HepG2 (cell line): ENCODE measurements at regions of chr11 and their contacts with region 1.

Region 1: DNA sequence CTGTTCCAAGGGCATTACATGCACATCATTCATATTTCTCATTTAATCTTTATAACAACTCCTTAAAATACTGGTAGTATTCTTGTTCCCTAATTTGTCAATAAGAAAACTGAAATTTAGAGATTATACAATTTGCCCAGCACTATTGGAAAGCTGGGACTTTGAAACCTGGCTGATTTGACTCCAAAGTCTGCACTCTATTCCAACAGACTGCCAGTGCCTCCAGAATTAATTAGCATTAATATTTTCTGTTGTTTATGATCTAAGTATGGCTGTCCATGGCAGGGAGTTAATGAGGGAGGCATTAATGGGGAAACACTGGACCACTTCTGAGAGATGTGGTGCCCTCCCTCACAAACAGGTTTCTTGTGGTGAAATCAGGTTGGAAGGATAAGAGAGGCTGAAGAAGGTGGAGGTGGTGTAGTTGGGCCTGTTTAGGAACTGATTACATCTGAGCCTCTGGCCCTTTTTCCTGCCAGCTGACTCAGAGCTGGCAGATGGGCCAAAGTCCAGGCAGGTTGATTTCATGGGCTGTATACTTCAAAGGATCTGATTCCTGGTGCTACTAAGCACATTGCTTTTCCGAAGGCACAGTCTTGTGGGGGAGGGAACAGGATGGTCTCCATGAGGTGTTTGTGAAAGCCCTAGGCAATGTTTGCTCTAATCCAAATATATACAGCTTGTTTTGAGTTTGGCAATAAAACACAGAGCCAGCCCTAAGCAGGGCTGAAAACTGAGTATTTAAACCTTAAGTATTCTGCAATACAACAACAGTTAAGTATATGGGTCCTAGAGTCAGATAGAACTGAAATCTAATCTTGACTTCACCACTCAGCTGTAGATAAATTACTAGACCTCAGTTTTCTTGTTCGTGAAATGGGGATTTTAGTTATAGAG is 21.0 kb upstream of the RAB30 start:
- DNase-seq: peak; percentile 98
- ATAC-seq: peak; percentile 97
- H3K4me3 ChIP-seq: peak overlapping the region in 2 of 3 experiments; percentile 0 to 33; a peak in 1 of 6 replicates
- H3K27ac ChIP-seq: peak overlapping the region; percentile 90
- H3K4me1 ChIP-seq: peaks cover 32% of the 10 kb centered on the region
- H3K27me3 ChIP-seq: no peaks in the 10 kb centered on the region
- CTCF ChIP-seq: no peak
- EP300 ChIP-seq: peak in 1 of 2 experiments; percentile 91; a peak in 2 of 4 replicates
- POLR2A ChIP-seq: peak; percentile 31 to 41; a peak in 2 of 4 replicates
- RAD21 ChIP-seq: peak; percentile 40; the same call in 1 of the 2 replicates

Region 2: GRCh38 chr11:82890936-82891335 is 201.8 kb before region 1 on chr11:
- CTCF ChIA-PET with region 1: no interaction called
- POLR2A ChIA-PET with region 1: no interaction called
- in situ Hi-C with region 1: no loop called
- intact Hi-C with region 1: no loop called
- DNase-seq: no peak
- ATAC-seq: no peak
- H3K4me3 ChIP-seq: no peak overlapping the region
- H3K27ac ChIP-seq: no peak overlapping the region
- H3K4me1 ChIP-seq: peaks cover 5% of the 10 kb centered on the region; the same call in 1 of the 2 replicates
- H3K27me3 ChIP-seq: no peaks in the 10 kb centered on the region
- CTCF ChIP-seq: no peak
- EP300 ChIP-seq: no peak
- POLR2A ChIP-seq: no peak
- RAD21 ChIP-seq: no peak

Region 3: DNA sequence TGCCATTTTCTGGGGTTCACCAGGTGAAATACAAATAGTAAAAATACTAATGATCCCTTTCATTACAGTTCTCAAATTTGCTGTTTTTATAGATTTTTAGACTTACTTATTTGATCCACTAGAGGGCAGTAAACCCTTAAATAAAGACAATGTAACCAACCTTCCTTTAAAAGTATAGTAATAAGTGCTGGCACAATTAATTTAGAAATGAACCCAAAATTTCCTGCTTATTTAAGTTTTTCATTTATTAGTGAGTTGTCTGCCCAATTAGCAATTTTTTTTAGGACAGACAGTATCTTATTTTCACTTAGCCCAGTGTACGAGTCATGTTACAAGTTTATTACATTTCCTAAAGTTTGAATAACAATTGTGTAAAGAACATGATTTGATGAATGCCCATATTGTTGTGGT is 186.5 kb before region 1 on chr11:
- CTCF ChIA-PET with region 1: no interaction called
- POLR2A ChIA-PET with region 1: interaction called, 6 read pairs
- in situ Hi-C with region 1: no loop called
- intact Hi-C with region 1: loop called (anchors 5 kb)
- DNase-seq: peak; percentile 26
- ATAC-seq: no peak
- H3K4me3 ChIP-seq: no peak overlapping the region
- H3K27ac ChIP-seq: no peak overlapping the region
- H3K4me1 ChIP-seq: peaks cover 32% of the 10 kb centered on the region
- H3K27me3 ChIP-seq: no peaks in the 10 kb centered on the region
- CTCF ChIP-seq: peak; percentile 51
- EP300 ChIP-seq: no peak
- POLR2A ChIP-seq: no peak
- RAD21 ChIP-seq: peak; percentile 32; the same call in 1 of the 2 replicates

Region 4: GRCh38 chr11:83115551-83115950 is 22.8 kb after region 1 on chr11:
- CTCF ChIA-PET with region 1: no interaction called
- POLR2A ChIA-PET with region 1: interaction called, 6 read pairs
- in situ Hi-C with region 1: no loop called
- intact Hi-C with region 1: loop called (anchors 1 kb)
- DNase-seq: peak; percentile 66
- ATAC-seq: peak; percentile 97
- H3K4me3 ChIP-seq: peak overlapping the region; percentile 18 to 51 (median 47); a peak in 5 of 6 replicates
- H3K27ac ChIP-seq: peak overlapping the region; percentile 27
- H3K4me1 ChIP-seq: peaks cover 52% of the 10 kb centered on the region
- H3K27me3 ChIP-seq: no peaks in the 10 kb centered on the region
- CTCF ChIP-seq: peak; percentile 55
- EP300 ChIP-seq: no peak
- POLR2A ChIP-seq: no peak
- RAD21 ChIP-seq: no peak

Region 5: GRCh38 chr11:83162377-83162776 is 69.6 kb after region 1 on chr11:
- CTCF ChIA-PET with region 1: no interaction called
- POLR2A ChIA-PET with region 1: interaction called, 37 read pairs
- in situ Hi-C with region 1: loop called (anchors 5 kb)
- intact Hi-C with region 1: loop called (anchors 2 kb)
- DNase-seq: no peak
- ATAC-seq: no peak
- H3K4me3 ChIP-seq: no peak overlapping the region
- H3K27ac ChIP-seq: no peak overlapping the region
- H3K4me1 ChIP-seq: peaks cover 38% of the 10 kb centered on the region
- H3K27me3 ChIP-seq: no peaks in the 10 kb centered on the region; a peak in 1 of 5 replicates
- CTCF ChIP-seq: no peak
- EP300 ChIP-seq: no peak
- POLR2A ChIP-seq: no peak
- RAD21 ChIP-seq: no peak

Region 6: GRCh38 chr11:83205608-83206185 is 113.0 kb after region 1 on chr11:
- CTCF ChIA-PET with region 1: no interaction called
- POLR2A ChIA-PET with region 1: no interaction called
- in situ Hi-C with region 1: no loop called
- intact Hi-C with region 1: no loop called
- DNase-seq: no peak
- ATAC-seq: no peak
- H3K4me3 ChIP-seq: no peak overlapping the region
- H3K27ac ChIP-seq: no peak overlapping the region
- H3K4me1 ChIP-seq: no peaks in the 10 kb centered on the region
- H3K27me3 ChIP-seq: no peaks in the 10 kb centered on the region; a peak in 1 of 5 replicates
- CTCF ChIP-seq: no peak
- EP300 ChIP-seq: no peak
- POLR2A ChIP-seq: no peak
- RAD21 ChIP-seq: no peak

Region 7: GRCh38 chr11:83364500-83365059 is 271.8 kb after region 1 on chr11:
- CTCF ChIA-PET with region 1: no interaction called
- POLR2A ChIA-PET with region 1: no interaction called
- in situ Hi-C with region 1: no loop called
- intact Hi-C with region 1: no loop called
- DNase-seq: no peak
- ATAC-seq: no peak
- H3K4me3 ChIP-seq: no peak overlapping the region
- H3K27ac ChIP-seq: no peak overlapping the region
- H3K4me1 ChIP-seq: no peaks in the 10 kb centered on the region
- H3K27me3 ChIP-seq: no peaks in the 10 kb centered on the region
- CTCF ChIP-seq: no peak
- EP300 ChIP-seq: no peak
- POLR2A ChIP-seq: no peak
- RAD21 ChIP-seq: no peak